ENCODE measurements at regions of chr17 and their contacts with region 1.

Region 1: GRCh38 chr17:80575057-80575875 is 30.6 kb downstream of the RPTOR start:
- DNase-seq: peak; percentile 75
- H3K4me3 ChIP-seq: no peak overlapping the region
- H3K27ac ChIP-seq: peak overlapping the region; percentile 16
- H3K4me1 ChIP-seq: peaks cover 5% of the 10 kb centered on the region
- H3K27me3 ChIP-seq: no peaks in the 10 kb centered on the region
- CTCF ChIP-seq: peak; percentile 100

Region 2: GRCh38 chr17:80426681-80427326 is 148.5 kb before region 1 on chr17:
- CTCF ChIA-PET with region 1: interaction called, 5 read pairs
- dilution Hi-C with region 1: no loop called
- in situ Hi-C with region 1: loop called (anchors 5 to 10 kb)
- intact Hi-C with region 1: loop called (anchors 1 kb)
- DNase-seq: peak; percentile 46
- H3K4me3 ChIP-seq: no peak overlapping the region
- H3K27ac ChIP-seq: no peak overlapping the region
- H3K4me1 ChIP-seq: no peaks in the 10 kb centered on the region
- H3K27me3 ChIP-seq: no peaks in the 10 kb centered on the region
- CTCF ChIP-seq: peak; percentile 86 to 98

Region 3: GRCh38 chr17:80477647-80478478 is 97.4 kb before region 1 on chr17:
- CTCF ChIA-PET with region 1: no interaction called
- dilution Hi-C with region 1: no loop called
- in situ Hi-C with region 1: loop called in 1 of 2 experiments (anchors 10 kb)
- intact Hi-C with region 1: loop called (anchors 1 kb)
- DNase-seq: peak; percentile 35
- H3K4me3 ChIP-seq: peak overlapping the region in 2 of 3 experiments; percentile 30
- H3K27ac ChIP-seq: no peak overlapping the region
- H3K4me1 ChIP-seq: peaks cover 33% of the 10 kb centered on the region
- H3K27me3 ChIP-seq: peaks cover 57% of the 10 kb centered on the region
- CTCF ChIP-seq: peak; percentile 18 to 61

Region 4: GRCh38 chr17:80855948-80856862 is 280.9 kb after region 1 on chr17:
- CTCF ChIA-PET with region 1: interaction called, 23 read pairs
- dilution Hi-C with region 1: no loop called
- in situ Hi-C with region 1: no loop called
- intact Hi-C with region 1: loop called (anchors 10 kb)
- DNase-seq: peak; percentile 98
- H3K4me3 ChIP-seq: no peak overlapping the region
- H3K27ac ChIP-seq: peak overlapping the region; percentile 99
- H3K4me1 ChIP-seq: peaks cover 61% of the 10 kb centered on the region
- H3K27me3 ChIP-seq: no peaks in the 10 kb centered on the region
- CTCF ChIP-seq: no peak

Region 5: GRCh38 chr17:80981062-80981902 is 406.0 kb after region 1 on chr17:
- CTCF ChIA-PET with region 1: no interaction called
- dilution Hi-C with region 1: no loop called
- in situ Hi-C with region 1: no loop called
- intact Hi-C with region 1: loop called (anchors 2 kb)
- DNase-seq: no peak
- H3K4me3 ChIP-seq: no peak overlapping the region
- H3K27ac ChIP-seq: no peak overlapping the region
- H3K4me1 ChIP-seq: no peaks in the 10 kb centered on the region
- H3K27me3 ChIP-seq: no peaks in the 10 kb centered on the region
- CTCF ChIP-seq: peak; percentile 35 to 47

Measured in mammary epithelial cell (primary cell).